Activated naive CD4-positive, alpha-beta T cell treated with anti-CD3 and anti-CD28 coated beads for 36 hours (primary cell): ENCODE measurements at regions of chr7 and their contacts with region 1.

Region 1: DNA sequence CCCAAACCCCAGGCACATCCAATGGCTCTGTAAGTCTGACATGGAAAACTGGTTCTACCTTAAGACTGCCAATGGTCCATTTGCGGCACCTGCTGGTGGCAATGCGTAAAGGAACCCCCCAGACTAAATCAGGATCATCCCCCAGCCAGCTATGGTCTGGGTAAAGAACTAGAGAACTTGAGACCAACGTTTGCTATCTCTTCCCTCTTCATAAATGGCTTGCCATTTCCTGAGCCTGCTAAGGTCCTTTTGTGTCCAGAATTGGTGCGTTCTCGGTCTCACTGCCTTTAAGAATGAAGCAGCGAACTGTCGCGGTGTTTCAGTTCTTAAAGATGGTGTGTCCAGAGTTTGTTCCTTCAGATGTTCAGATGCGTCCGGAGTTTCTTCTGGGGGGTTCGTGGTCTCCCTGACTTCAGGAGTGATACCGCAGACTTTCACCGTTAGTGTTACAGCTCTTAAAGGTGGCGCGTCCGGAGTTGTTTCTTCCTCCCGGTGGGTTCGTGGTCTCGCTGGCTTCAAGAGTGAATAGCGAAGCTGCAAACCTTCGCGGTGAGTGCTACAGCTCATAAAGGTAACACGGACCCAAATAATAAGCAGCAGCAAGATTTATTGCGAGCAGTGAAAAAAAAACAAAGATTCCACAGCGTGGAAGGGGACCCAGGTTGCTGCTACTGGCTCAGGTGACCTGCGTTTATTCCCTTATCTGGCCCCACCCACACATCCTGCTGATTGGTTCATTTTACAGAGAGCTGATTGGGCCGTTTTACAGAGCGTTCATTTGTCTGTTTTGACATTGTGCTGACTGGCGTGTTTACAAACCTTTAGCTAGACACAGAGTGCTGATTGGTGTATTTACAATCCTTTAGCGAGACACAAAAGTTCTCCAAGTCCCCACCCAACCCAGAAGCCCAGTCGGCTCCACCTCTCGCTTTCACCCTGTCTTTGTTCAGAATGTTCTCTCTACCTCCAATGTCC is 95.4 kb downstream of the ELMO1 start:
- DNase-seq: peak; percentile 90
- H3K4me3 Mint-ChIP-seq: peak overlapping the region; percentile 96
- H3K27ac Mint-ChIP-seq: peak overlapping the region; percentile 97
- H3K4me1 Mint-ChIP-seq: peaks cover 88% of the 10 kb centered on the region
- H3K27me3 Mint-ChIP-seq: no peaks in the 10 kb centered on the region

Region 2: GRCh38 chr7:35801392-35802101 is 1551.7 kb before region 1 on chr7:
- CTCF ChIA-PET with region 1: no interaction called
- intact Hi-C with region 1: loop called (anchors 2 kb)
- DNase-seq: peak; percentile 75
- H3K4me3 Mint-ChIP-seq: peak overlapping the region; percentile 96
- H3K27ac Mint-ChIP-seq: peak overlapping the region; percentile 97
- H3K4me1 Mint-ChIP-seq: peaks cover 46% of the 10 kb centered on the region
- H3K27me3 Mint-ChIP-seq: no peaks in the 10 kb centered on the region

Region 3: DNA sequence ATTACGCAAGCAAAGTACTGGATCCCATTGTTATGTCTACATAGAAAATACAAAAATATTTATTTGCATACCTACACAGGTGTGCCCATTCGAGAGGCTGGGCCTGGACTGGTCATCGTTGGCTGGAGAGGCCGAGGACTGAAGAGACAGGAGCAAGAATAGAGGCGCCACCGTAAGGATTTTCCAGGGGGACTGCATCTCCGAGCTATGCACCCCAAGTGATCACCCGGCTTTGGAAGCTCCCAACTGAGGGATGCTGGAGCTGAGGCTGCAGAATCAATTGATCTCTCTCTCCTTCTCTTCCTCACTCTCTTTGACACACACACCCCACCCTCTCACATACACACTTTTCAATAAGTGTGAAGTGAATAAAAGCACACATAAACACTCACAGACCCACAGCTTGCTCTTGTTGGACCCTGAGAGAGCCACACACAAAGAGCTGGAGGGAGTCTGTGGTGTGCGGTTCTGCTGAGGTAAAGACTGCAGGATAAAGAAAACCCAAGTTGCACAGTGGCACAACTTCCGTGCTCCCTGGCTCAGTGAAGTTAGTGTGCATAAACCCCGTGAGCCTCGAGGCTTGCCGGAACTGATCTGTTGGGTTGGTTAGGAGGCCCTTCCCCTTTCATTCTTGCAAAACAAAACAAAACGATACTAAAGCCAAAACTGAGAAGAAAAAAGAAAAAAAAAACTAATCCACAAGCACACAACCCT is 629.2 kb before region 1 on chr7 and contains the start of gene AOAH:
- CTCF ChIA-PET with region 1: no interaction called
- intact Hi-C with region 1: loop called (anchors 10 kb)
- DNase-seq: peak; percentile 88
- H3K4me3 Mint-ChIP-seq: peak within 1 kb of the TSS; percentile 63
- H3K27ac Mint-ChIP-seq: peak within 1 kb of the TSS; percentile 84
- H3K4me1 Mint-ChIP-seq: peaks cover 70% of the 10 kb centered on the region
- H3K27me3 Mint-ChIP-seq: no peaks in the 10 kb centered on the region
- total RNA-seq, gene AOAH: 0.67 to 1.2 TPM

Region 4: DNA sequence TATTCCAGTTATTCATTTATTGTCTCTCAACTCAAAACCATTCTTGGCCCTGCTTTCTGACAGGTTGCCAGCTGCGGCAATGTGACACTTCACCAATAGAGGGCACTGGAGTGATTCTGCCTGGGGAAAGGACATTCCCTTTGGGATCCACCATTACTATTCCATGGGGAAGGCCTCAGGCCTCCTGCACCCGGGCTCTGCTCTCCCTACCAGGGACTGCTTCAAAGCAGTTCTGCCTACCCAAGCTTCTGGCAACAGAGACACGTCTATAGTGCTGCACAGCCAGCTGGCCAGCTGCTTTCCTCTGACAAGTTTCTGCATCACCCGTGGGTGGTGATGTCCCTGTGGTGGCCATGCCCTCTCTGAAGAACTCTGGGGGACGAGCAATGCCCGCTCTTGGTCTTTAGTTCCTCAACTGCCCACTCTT is 68.4 kb before region 1 on chr7:
- CTCF ChIA-PET with region 1: interaction called, 28 read pairs
- intact Hi-C with region 1: loop called (anchors 1 kb)
- DNase-seq: peak; percentile 53
- H3K4me3 Mint-ChIP-seq: no peak overlapping the region
- H3K27ac Mint-ChIP-seq: no peak overlapping the region
- H3K4me1 Mint-ChIP-seq: peaks cover 72% of the 10 kb centered on the region
- H3K27me3 Mint-ChIP-seq: no peaks in the 10 kb centered on the region

Region 5: DNA sequence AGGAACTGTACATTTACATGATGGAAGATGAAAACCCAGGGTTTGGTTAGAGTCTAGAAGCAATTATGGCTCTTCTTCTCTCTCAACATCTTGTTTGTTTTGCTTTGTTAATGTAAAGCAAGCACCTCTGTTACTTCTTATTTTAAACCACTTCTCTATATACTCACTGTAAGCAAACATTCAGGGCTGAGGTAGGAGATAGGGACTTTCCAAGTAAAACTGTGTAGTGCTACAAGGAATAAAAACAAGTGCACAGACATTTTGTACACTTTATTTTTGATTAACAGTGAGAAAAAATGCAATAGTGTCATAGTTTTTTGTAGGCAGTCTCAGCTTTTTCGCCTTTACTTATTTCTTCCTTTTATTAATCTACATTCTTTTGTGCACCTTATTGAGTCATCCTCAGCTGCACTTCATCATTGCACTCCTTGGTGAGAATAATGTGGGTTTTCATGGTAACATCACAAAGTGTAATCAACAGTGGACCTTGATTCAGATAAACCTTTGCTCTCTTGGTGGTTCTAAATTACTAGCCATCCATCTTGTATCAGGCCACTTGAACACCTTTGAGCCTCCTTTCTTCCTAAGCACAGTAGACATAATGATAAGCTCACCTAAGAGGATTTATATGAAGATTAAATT is 42.5 kb after region 1 on chr7:
- CTCF ChIA-PET with region 1: interaction called, 3 read pairs
- intact Hi-C with region 1: loop called (anchors 1 kb)
- DNase-seq: peak; percentile 26
- H3K4me3 Mint-ChIP-seq: no peak overlapping the region
- H3K27ac Mint-ChIP-seq: peak overlapping the region; percentile 80
- H3K4me1 Mint-ChIP-seq: peaks cover 77% of the 10 kb centered on the region
- H3K27me3 Mint-ChIP-seq: no peaks in the 10 kb centered on the region

Region 6: GRCh38 chr7:37495574-37496184 is 142.4 kb after region 1 on chr7:
- CTCF ChIA-PET with region 1: interaction called, 8 read pairs
- intact Hi-C with region 1: loop called (anchors 1 kb)
- DNase-seq: no peak
- H3K4me3 Mint-ChIP-seq: no peak overlapping the region
- H3K27ac Mint-ChIP-seq: no peak overlapping the region
- H3K4me1 Mint-ChIP-seq: peaks cover 8% of the 10 kb centered on the region
- H3K27me3 Mint-ChIP-seq: no peaks in the 10 kb centered on the region